PC-9 (cell line): ENCODE measurements at regions of chr9 and their contacts with region 1.

Region 1: DNA sequence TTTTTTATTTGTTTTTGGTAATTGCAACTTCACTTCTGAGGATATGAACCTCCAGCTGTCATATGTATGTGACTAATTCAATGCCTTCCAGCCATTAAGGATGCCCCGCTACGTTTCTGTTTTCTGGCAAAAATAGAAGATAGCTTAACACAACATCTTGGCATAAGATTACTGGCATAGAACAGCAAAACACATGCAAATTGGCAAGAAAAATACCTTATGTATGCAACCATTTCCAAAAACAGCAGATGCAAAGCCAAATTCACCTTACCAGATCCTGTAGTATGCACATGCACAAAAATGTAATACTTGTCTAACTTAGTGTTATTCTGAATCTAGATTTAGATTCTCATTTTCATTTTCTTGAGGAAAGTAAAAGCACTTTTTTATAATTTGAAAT is 461.1 kb upstream of the CYLC2 start:
- DNase-seq: no peak
- H3K4me3 ChIP-seq: no peak overlapping the region
- H3K27ac ChIP-seq: no peak overlapping the region
- H3K4me1 ChIP-seq: no peaks in the 10 kb centered on the region
- H3K27me3 ChIP-seq: no peaks in the 10 kb centered on the region
- CTCF ChIP-seq: no peak

Region 2: DNA sequence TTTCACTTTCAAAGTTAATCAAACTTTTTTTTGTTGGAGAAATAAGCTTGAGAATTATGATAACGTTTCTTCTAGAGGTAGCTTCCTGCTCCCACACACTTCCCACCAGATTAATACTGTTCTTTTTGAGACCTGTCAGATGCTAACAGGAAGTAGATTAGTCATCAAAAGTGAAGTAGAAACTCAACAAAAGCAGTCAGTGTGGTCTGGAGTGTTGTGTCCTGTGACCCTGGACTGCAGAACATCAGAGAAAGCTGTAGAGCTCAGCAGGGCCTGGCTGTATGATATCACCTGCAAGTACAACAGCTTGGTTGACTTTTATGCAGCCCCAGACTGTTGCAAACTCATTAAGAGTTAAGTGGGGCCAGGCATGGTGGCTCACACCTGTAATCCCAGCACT is 34.6 kb before region 1 on chr9:
- CTCF ChIA-PET with region 1: no interaction called
- POLR2A ChIA-PET with region 1: no interaction called
- intact Hi-C with region 1: no loop called
- DNase-seq: no peak
- H3K4me3 ChIP-seq: no peak overlapping the region
- H3K27ac ChIP-seq: no peak overlapping the region
- H3K4me1 ChIP-seq: no peaks in the 10 kb centered on the region
- H3K27me3 ChIP-seq: no peaks in the 10 kb centered on the region
- CTCF ChIP-seq: no peak

Region 3: DNA sequence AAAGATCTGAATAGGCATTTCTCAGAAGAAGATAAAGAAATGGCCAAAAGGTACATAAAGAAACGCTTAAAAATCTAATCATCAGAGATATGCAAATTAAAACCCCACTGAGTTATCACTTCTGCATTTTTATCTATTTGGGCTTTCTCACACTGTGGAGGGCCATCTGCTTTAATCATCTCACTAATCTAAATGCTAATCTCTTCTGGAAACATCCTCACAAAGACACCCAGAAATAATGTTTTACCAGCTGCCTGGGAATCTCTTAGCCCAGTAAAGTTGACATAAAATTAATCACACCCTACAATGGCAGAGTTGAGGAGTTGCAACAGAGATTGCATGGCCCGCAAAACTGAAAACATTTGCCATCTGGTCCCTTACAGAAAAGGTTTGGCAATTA is 53.2 kb after region 1 on chr9:
- CTCF ChIA-PET with region 1: no interaction called
- POLR2A ChIA-PET with region 1: no interaction called
- intact Hi-C with region 1: loop called (anchors 2 kb)
- DNase-seq: no peak
- H3K4me3 ChIP-seq: no peak overlapping the region
- H3K27ac ChIP-seq: no peak overlapping the region
- H3K4me1 ChIP-seq: no peaks in the 10 kb centered on the region
- H3K27me3 ChIP-seq: no peaks in the 10 kb centered on the region
- CTCF ChIP-seq: no peak

Region 4: GRCh38 chr9:102700936-102701335 is 166.9 kb after region 1 on chr9:
- CTCF ChIA-PET with region 1: no interaction called
- POLR2A ChIA-PET with region 1: no interaction called
- intact Hi-C with region 1: no loop called
- DNase-seq: no peak
- H3K4me3 ChIP-seq: no peak overlapping the region
- H3K27ac ChIP-seq: no peak overlapping the region
- H3K4me1 ChIP-seq: no peaks in the 10 kb centered on the region
- H3K27me3 ChIP-seq: no peaks in the 10 kb centered on the region
- CTCF ChIP-seq: no peak